ENCODE measurements at regions of chr2 and their contacts with region 1.

Region 1: DNA sequence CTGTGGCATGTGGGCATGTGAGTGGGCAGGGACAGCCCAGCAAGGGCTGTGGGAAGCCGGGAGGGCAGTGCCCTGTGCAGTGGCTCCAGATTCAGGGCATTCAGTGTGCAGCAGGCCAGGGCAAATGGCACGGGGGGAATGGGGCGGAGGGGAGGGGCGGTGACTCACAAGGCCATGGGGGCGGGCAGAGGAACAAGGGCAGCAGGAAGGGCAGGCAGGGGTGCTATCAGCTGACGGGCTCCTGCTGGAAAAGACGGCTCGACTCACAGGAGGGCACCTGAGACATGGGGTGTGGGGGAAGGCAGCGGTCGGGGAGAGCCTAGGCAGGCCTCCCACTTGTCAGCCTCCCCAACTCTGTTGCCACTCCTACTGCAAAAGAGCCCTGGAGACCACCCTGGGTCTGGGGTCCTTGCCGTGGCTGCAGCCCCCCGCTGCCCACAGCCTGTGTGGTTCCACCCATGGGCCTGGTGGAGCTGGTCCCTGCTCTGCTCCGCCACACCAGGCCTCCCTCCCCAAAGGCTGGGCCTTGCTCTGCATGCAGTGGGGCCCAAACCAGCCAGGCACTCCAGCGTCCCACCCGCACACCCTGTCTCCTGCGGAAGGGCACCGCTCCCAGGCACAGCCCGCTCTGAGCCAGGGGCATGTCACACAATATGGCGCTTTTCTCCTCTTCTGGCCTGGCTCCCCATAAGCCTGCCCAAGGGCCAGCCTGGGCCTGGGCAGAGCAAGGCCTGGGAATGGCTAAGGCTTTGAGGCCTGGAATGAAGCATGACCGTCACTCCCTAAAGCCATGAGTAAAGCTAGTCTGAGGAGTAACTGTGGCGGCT is 25.9 kb downstream of the HS6ST1 start:
- DNase-seq: peak; percentile 58 to 71
- ATAC-seq: peak; percentile 84 to 92 (median 86)
- H3K4me3 ChIP-seq: no peak overlapping the region
- H3K27ac ChIP-seq: peak overlapping the region; percentile 72
- H3K4me1 ChIP-seq: peaks cover 32% of the 10 kb centered on the region
- H3K27me3 ChIP-seq: no peaks in the 10 kb centered on the region
- CTCF ChIP-seq: no peak

Region 2: DNA sequence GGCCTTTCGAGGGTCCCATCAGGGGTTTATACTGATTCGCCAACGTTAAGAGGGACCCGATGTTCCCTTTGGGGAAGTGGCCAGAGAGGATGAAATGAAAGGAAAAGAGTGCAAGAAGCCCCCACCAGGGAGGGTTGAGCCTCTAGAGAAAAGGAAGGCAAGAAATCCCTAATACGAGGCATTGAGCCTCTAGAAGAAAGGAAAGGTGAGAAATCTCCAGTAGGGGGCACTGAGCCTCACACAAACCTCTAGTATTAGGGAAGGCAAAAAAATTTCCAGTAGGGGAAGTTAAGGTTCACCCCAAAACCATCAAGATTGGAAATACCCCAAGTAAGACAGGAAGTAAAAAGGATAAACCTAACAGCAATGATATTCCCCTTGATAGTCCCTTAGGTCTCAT is 255.2 kb before region 1 on chr2:
- intact Hi-C with region 1: no loop called
- DNase-seq: no peak
- ATAC-seq: no peak
- H3K4me3 ChIP-seq: no peak overlapping the region
- H3K27ac ChIP-seq: no peak overlapping the region
- H3K4me1 ChIP-seq: no peaks in the 10 kb centered on the region
- H3K27me3 ChIP-seq: peaks cover 0 to 4% (median 0%) of the 10 kb centered on the region in 3 donors
- CTCF ChIP-seq: no peak

Region 3: GRCh38 chr2:128162266-128162665 is 130.5 kb before region 1 on chr2:
- intact Hi-C with region 1: no loop called
- DNase-seq: no peak
- ATAC-seq: no peak
- H3K4me3 ChIP-seq: no peak overlapping the region
- H3K27ac ChIP-seq: no peak overlapping the region
- H3K4me1 ChIP-seq: no peaks in the 10 kb centered on the region
- H3K27me3 ChIP-seq: no peaks in the 10 kb centered on the region
- CTCF ChIP-seq: no peak

Region 4: DNA sequence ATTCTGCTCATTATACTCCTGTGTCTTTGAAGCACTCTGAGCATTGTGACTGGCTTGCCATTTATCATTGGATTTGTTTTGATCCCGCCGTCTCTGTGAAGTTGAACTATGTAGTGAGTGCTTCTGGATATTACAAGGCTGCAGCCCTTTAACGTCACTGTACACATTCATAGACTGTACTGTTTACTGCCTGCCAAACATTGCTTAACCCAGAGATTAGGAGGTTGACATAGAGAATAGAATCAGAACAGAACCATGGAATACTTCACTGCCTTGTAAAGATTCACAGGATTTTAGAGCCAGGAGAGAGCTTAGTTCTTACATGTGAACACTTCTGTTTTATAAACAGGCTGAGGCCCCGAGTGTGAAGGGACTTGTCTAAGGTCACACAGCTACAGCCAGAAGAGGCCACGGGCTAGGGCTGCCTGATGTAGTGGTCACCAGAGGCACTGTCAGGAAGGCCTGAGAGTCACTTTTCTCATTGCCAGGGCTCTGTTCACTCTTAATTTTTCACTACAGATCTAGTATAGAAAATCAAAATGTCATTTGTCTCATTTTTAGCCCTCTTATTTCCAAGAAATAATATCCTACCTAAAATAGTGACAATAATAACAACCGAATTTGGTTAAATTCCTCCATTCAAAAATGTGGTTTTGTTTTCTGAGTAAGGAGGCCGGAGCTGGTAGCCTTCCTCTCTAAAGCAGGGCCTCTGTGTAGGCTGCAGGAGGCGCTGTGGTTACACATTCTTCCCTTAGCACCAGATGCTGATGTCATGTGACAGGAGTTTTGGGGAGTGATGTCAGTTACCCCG is 114.0 kb before region 1 on chr2:
- intact Hi-C with region 1: loop called (anchors 5 kb)
- DNase-seq: peak; percentile 59 to 79
- ATAC-seq: peak; percentile 88 to 94 (median 91)
- H3K4me3 ChIP-seq: no peak overlapping the region
- H3K27ac ChIP-seq: no peak overlapping the region
- H3K4me1 ChIP-seq: no peaks in the 10 kb centered on the region
- H3K27me3 ChIP-seq: no peaks in the 10 kb centered on the region
- CTCF ChIP-seq: peak; percentile 83

Measured in psoas muscle (tissue), 8 donors.